Heart left ventricle (tissue), 16 donors: ENCODE measurements at regions of chr12 and their contacts with region 1.

Region 1: GRCh38 chr12:11798856-11799501 is 149.5 kb downstream of the ETV6 start:
- DNase-seq: peak in 2 of 5 donors; percentile 51 to 63
- ATAC-seq: peak in 1 of 4 donors; percentile 25
- H3K4me3 ChIP-seq: no peak overlapping the region
- H3K27ac ChIP-seq: peak overlapping the region in 7 of 12 donors; percentile 4 to 75 (median 40)
- H3K4me1 ChIP-seq: peaks cover 0 to 80% (median 43%) of the 10 kb centered on the region in 12 donors
- H3K27me3 ChIP-seq: no peaks in the 10 kb centered on the region
- CTCF ChIP-seq: no peak
- POLR2A ChIP-seq: no peak

Region 2: GRCh38 chr12:10701131-10701681 is 1097.8 kb before region 1 on chr12:
- intact Hi-C with region 1: no loop called
- DNase-seq: no peak
- ATAC-seq: no peak
- H3K4me3 ChIP-seq: no peak overlapping the region
- H3K27ac ChIP-seq: peak overlapping the region in 1 of 12 donors; percentile 33
- H3K4me1 ChIP-seq: peaks cover 0 to 27% (median 13%) of the 10 kb centered on the region in 12 donors
- H3K27me3 ChIP-seq: no peaks in the 10 kb centered on the region
- CTCF ChIP-seq: no peak
- POLR2A ChIP-seq: no peak

Region 3: DNA sequence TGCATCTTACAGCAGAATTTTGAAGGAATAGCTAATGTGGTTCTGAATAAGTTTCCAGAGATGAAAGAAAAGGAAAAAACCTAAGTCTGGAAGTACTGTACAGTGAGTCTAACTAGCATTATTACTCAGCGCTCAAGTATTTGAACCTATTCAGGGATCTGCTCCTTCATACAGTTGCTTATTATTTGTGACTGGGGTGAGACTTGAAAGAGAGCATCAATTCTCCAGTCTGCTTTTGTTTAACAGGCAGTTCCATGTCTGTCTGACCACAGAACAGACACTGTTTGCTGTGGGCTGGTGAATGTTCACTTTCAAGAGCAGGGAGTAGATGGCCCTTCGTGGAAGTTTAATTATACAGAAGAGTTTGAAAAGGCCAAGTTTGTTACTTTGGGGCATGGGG is 140.2 kb before region 1 on chr12:
- intact Hi-C with region 1: loop called in 1 of 10 experiments (anchors 5 kb)
- DNase-seq: no peak
- ATAC-seq: no peak
- H3K4me3 ChIP-seq: no peak overlapping the region
- H3K27ac ChIP-seq: peak overlapping the region in 5 of 12 donors; percentile 6 to 77 (median 7)
- H3K4me1 ChIP-seq: peaks cover 0 to 98% (median 68%) of the 10 kb centered on the region in 12 donors
- H3K27me3 ChIP-seq: no peaks in the 10 kb centered on the region
- CTCF ChIP-seq: no peak
- POLR2A ChIP-seq: no peak

Region 4: GRCh38 chr12:11730299-11731041 is 68.5 kb before region 1 on chr12:
- intact Hi-C with region 1: no loop called
- DNase-seq: no peak
- ATAC-seq: no peak
- H3K4me3 ChIP-seq: no peak overlapping the region
- H3K27ac ChIP-seq: peak overlapping the region in 1 of 12 donors; percentile 25
- H3K4me1 ChIP-seq: peaks cover 0 to 73% (median 9%) of the 10 kb centered on the region in 12 donors
- H3K27me3 ChIP-seq: no peaks in the 10 kb centered on the region
- CTCF ChIP-seq: no peak
- POLR2A ChIP-seq: no peak

Region 5: GRCh38 chr12:11746024-11746771 is 52.8 kb before region 1 on chr12:
- intact Hi-C with region 1: no loop called
- DNase-seq: no peak
- ATAC-seq: peak in 2 of 4 donors; percentile 36 to 41
- H3K4me3 ChIP-seq: no peak overlapping the region
- H3K27ac ChIP-seq: peak overlapping the region in 1 of 12 donors; percentile 78
- H3K4me1 ChIP-seq: peaks cover 0 to 78% (median 10%) of the 10 kb centered on the region in 12 donors
- H3K27me3 ChIP-seq: no peaks in the 10 kb centered on the region
- CTCF ChIP-seq: no peak
- POLR2A ChIP-seq: no peak